Activated CD4-positive, alpha-beta T cell treated with anti-CD3 and anti-CD28 coated beads, Interleukin-2, amount 10 ng/mL, durations not matched to agents 7 days and 5 days (primary cell): ENCODE measurements at regions of chr19 and their contacts with region 1.

Region 1: GRCh38 chr19:36132489-36132891 is 7.4 kb upstream of the CAPNS1 start:
- DNase-seq: peak; percentile 63
- H3K4me3 Mint-ChIP-seq: no peak overlapping the region
- H3K27ac Mint-ChIP-seq: peak overlapping the region; percentile 91
- H3K4me1 Mint-ChIP-seq: peaks cover 50% of the 10 kb centered on the region
- H3K27me3 Mint-ChIP-seq: no peaks in the 10 kb centered on the region

Region 2: DNA sequence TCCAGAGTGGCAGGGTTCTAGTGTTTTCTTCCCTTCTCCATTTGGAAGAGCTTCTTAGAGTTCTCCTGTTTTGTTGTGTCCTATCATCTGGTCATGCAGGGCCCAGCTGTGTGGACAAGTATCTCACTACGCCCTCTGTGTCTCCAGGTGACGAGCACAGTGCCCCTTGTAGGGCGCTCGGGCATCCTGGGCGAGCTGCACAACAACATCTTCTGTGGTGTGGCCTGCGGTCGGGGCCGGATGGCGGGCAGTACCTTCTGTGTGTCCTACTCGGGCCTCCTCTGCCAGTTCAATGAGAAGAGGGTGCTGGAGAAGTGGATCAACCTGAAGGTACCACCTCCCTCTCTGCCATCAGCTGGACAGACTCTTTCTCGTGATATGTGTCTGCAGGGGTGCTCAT is 64.8 kb before region 1 on chr19:
- CTCF ChIA-PET with region 1: no interaction called
- POLR2A ChIA-PET with region 1: no interaction called
- DNase-seq: no peak
- H3K4me3 Mint-ChIP-seq: no peak overlapping the region
- H3K27ac Mint-ChIP-seq: no peak overlapping the region
- H3K4me1 Mint-ChIP-seq: no peaks in the 10 kb centered on the region
- H3K27me3 Mint-ChIP-seq: no peaks in the 10 kb centered on the region

Region 3: GRCh38 chr19:36114763-36115452 is 17.6 kb before region 1 on chr19 and contains the start of gene POLR2I:
- CTCF ChIA-PET with region 1: interaction called, 47 read pairs
- POLR2A ChIA-PET with region 1: interaction called, 3 read pairs
- DNase-seq: peak; percentile 100
- H3K4me3 Mint-ChIP-seq: peak within 1 kb of the TSS; percentile 98
- H3K27ac Mint-ChIP-seq: peak within 1 kb of the TSS; percentile 95
- H3K4me1 Mint-ChIP-seq: peaks cover 42% of the 10 kb centered on the region
- H3K27me3 Mint-ChIP-seq: no peaks in the 10 kb centered on the region
- total RNA-seq, gene POLR2I: 51.2 to 56.4 TPM

Region 4: GRCh38 chr19:36169084-36169760 is 36.7 kb after region 1 on chr19:
- CTCF ChIA-PET with region 1: interaction called, 18 read pairs
- POLR2A ChIA-PET with region 1: no interaction called
- DNase-seq: no peak
- H3K4me3 Mint-ChIP-seq: no peak overlapping the region
- H3K27ac Mint-ChIP-seq: peak overlapping the region; percentile 43
- H3K4me1 Mint-ChIP-seq: peaks cover 5% of the 10 kb centered on the region
- H3K27me3 Mint-ChIP-seq: no peaks in the 10 kb centered on the region

Region 5: GRCh38 chr19:36182612-36183244 is 50.2 kb after region 1 on chr19:
- CTCF ChIA-PET with region 1: interaction called, 12 read pairs
- POLR2A ChIA-PET with region 1: no interaction called
- DNase-seq: no peak
- H3K4me3 Mint-ChIP-seq: no peak overlapping the region
- H3K27ac Mint-ChIP-seq: no peak overlapping the region
- H3K4me1 Mint-ChIP-seq: no peaks in the 10 kb centered on the region
- H3K27me3 Mint-ChIP-seq: no peaks in the 10 kb centered on the region

Region 6: DNA sequence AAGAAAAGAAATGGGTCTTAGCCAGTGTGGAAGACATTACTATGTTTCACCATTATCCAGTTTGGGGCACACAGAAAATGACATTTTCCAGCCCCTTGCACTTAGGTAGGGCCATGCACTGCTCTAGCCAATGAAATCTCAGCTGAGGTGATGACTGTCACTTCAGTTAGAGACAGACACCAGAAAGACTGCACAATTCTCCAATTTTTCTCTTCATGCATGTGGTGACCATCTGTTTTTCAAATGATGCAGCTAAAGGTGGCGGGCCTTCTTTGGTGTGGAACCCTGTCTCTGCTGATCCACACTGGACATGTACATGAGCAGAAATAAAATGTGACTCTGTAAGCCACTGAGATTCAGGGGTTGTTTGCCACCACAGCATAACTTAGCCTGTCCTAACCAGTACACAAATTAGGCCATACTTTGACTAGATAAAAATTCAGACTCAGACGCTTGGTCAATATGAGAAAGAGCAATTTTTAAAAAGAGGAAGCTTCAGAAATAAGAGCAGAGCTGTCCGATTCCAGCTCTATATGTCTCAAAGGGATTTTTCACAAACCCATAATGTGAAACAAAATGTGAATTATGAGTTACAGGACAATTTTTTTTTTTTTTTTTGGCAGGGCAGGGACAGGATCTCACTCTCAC is 75.2 kb after region 1 on chr19:
- CTCF ChIA-PET with region 1: interaction called, 13 read pairs
- POLR2A ChIA-PET with region 1: no interaction called
- DNase-seq: no peak
- H3K4me3 Mint-ChIP-seq: no peak overlapping the region
- H3K27ac Mint-ChIP-seq: no peak overlapping the region
- H3K4me1 Mint-ChIP-seq: no peaks in the 10 kb centered on the region
- H3K27me3 Mint-ChIP-seq: no peaks in the 10 kb centered on the region

Region 7: GRCh38 chr19:36214386-36215275 is 82.1 kb after region 1 on chr19 and contains the starts of genes ZNF146 and ZNF565:
- CTCF ChIA-PET with region 1: interaction called, 11 read pairs
- POLR2A ChIA-PET with region 1: no interaction called
- DNase-seq: peak; percentile 98
- H3K4me3 Mint-ChIP-seq: no peak within 1 kb of the TSS
- H3K27ac Mint-ChIP-seq: no peak within 1 kb of the TSS
- H3K4me1 Mint-ChIP-seq: peaks cover 20% of the 10 kb centered on the region
- H3K27me3 Mint-ChIP-seq: no peaks in the 10 kb centered on the region
- total RNA-seq, gene ZNF146: 59.5 to 65.0 TPM
- total RNA-seq, gene ZNF565: 2.7 to 3.3 TPM